ENCODE measurements at regions of chr16 and their contacts with region 1.

Region 1: DNA sequence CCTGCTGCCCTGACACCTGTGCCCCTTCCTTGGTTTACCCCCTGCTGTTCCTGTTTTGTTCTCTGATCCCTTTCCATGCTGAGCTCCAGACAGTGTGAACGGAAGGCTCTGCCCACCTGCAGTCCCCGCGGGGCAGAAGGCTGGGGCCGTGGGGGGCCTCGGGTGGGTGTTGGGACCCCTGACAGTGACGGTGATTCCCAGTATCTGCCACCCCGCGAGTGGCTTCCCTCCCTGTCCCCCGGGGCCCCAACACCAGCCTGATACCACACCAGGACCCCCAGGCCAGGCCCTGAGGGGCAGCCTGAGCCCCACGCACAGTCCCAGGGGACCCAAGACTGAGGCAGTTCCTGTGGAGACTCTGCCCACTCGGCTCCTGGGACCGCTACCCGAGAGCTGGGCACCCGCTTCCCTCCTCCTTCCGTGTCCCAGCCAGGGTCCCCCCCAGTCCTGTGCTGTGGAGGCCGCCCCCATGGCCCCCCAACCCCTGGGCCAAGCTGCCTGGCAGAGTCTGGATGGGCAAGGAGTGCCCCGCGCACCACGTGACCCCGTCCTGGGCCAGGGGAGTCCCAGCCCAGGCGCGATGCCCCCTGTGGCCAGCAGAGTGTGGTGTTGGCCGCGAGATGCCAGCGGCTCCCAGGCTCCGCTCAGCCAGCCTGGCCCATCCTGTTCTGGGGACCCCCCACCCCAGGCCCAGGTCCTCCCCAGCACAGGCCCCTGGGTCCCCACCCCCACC is 10.0 kb upstream of the C1QTNF8 start:
- DNase-seq: peak; percentile 63 to 97 (median 78)

Region 2: DNA sequence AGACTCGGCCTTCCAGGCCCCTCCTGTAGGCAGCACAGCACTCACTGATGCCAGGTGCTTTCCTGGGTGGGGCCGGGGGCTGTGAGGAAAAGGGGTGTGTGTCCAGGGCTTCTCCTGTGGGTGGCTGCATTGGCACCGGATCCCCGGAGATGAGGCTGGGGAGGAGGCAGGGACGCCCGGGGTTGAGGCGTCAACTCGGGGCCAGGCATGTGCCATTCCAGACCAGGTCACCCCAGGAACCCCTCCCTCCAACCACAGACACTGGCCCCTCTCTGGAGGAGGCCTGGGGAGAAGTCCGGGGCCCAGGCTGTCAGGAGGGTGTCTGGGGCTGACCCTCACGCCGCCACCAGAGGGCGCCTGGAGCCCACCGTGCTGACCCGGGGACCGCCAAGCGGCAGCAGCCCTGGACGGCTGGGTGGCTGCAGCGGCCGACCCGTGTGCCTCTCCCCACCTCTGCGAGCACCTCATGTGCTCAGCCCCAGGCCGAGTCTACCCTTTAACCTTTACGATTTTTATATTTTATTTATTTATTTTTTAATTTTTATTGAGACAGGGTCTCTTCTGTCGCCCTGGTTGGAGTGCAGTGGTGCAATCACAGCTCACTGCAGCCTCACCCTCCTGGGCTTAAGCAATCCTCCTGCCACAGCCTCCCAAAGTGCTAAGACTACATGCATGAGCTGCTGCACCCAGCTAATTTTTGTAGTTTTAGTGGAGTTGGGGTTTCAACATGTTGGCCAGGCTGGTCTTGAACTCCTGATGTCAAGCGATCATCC is 394.3 kb before region 1 on chr16:
- intact Hi-C with region 1: loop called (anchors 2 kb)
- DNase-seq: peak in 9 of 10 donors; percentile 73 to 97 (median 85)

Region 3: DNA sequence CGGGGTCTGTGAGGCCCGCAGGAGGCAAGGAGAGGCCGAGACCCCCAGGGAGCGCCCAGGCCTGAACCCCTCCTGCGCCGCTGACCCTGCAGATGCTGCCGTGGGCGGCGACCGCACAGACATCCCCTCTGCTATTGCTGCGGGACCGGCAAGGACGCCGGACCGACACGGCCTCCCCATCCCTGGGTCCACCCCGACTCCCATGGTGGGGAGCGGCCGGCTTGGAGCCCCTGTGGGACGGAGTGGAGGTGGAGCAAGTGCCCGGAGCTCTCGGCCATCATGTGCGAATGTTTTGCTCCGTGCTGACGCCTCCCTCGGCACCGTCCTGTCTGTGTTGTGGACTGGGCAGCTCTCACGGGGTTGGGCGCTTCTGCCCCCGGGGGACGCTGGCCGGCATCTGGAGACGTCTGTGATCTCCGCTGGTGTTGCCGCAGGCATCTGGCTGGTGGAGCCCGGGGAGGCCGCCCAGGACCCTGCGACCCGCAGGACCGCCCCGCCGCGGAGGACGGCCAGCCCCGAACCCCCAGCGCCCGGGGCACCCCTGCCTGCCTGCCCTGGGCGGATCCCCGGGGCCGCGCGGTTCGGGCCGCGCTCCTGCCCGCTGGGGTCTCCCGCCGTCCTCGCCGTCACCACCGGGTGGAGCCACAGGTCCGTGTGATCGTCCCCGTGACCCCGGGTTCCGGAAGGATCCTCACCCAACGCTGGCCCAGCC is 292.7 kb before region 1 on chr16:
- intact Hi-C with region 1: loop called (anchors 2 kb)
- DNase-seq: peak; percentile 39 to 95 (median 70)

Region 4: DNA sequence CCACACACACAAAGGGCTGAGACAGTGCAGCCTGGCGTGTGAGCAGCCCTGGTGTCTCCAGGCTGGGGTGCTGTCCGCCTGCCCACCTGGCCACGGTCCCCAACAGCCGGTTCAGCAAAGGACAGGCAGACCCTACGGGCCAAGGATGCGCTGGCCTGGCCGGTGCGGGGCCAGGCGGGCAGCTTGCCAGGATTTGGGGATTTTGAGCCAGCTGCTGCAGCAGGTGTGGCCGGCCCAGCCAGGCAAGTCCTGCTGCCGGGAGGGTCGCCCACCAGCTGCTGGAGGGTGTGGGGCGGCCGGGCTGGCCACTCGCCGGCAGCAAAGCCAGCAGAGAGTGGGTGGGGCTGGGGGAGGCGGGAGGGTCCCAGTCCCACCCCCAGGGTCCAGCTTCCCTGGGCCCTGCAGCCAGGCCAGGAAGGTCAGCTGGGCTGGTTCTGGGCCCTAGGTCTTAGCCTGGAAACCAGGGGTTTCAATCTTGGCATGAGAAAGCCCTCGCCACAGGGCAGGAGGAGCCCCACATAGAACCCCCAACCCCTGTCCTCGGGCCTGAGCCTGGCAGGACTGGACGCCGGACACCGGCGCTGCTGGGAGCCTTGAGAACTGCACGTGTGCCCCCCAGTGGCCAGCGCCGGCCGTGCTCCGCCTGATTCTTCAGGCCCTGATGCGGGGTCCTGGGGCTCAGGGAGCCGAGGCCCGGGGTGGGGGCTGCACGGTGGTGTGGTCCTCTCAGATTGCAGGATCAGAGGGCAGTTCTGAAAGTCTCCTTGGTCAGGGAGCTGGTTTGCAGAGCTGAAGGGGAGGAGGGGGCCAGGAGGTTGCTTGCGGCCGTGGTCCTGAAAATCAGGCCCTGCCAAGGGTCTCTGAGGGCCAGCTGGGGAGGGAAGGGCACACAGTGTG is 51.1 kb before region 1 on chr16:
- intact Hi-C with region 1: loop called (anchors 2 kb)
- DNase-seq: peak; percentile 57 to 97 (median 80)

Region 5: GRCh38 chr16:1194665-1195392 is 88.8 kb after region 1 on chr16:
- intact Hi-C with region 1: loop called (anchors 1 kb)
- DNase-seq: peak in 1 of 10 donors; percentile 32

Measured in posterior cingulate gyrus (tissue), 11 donors.